Activated naive CD4-positive, alpha-beta T cell treated with anti-CD3 and anti-CD28 coated beads for 36 hours (primary cell): ENCODE measurements at regions of chr10 and their contacts with region 1.

Region 1: GRCh38 chr10:123154092-123154921 is at the start of gene BUB3:
- DNase-seq: peak; percentile 98
- H3K4me3 Mint-ChIP-seq: peak within 1 kb of the TSS; percentile 97
- H3K27ac Mint-ChIP-seq: peak within 1 kb of the TSS; percentile 100
- H3K4me1 Mint-ChIP-seq: peaks cover 71% of the 10 kb centered on the region
- H3K27me3 Mint-ChIP-seq: peaks cover 3% of the 10 kb centered on the region
- total RNA-seq, gene BUB3: 293 to 307 TPM

Region 2: DNA sequence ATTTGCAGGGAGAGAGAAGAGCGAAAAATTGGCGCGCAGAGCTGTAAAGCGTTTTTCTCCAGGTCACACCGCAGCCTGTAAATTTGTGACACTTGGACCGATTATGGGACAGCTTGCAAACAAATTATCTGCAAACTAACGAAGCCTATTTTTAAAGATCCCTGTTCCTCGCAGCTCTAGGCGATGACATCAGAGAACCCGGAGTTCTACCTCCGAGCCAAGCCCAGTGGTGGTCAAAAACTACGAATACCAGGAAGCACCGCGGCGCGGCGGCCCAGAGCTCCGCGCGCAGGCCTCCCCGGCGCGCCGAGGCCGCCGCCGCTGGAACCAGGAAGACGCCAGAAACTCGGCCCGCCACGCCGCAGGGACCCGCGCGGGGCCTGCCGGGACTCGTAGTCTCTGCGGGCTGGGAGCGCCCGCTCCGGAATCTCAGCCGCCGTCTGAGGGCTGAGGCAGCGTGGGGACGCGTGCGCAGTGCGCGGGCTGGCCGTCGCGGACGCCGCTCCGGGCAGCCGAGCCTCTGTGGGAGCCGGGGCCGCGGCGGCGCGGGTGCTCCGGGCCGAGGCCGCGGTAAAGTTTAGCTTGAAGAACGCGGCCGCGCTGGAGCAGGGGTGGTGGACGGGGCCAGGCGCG is 780.0 kb before region 1 on chr10 and contains the start of gene PLEKHA1:
- CTCF ChIA-PET with region 1: no interaction called
- intact Hi-C with region 1: loop called (anchors 1 kb)
- DNase-seq: peak; percentile 93
- H3K4me3 Mint-ChIP-seq: peak within 1 kb of the TSS; percentile 90
- H3K27ac Mint-ChIP-seq: peak within 1 kb of the TSS; percentile 94
- H3K4me1 Mint-ChIP-seq: peaks cover 37% of the 10 kb centered on the region
- H3K27me3 Mint-ChIP-seq: no peaks in the 10 kb centered on the region
- total RNA-seq, gene PLEKHA1: 17.6 to 17.9 TPM

Region 3: DNA sequence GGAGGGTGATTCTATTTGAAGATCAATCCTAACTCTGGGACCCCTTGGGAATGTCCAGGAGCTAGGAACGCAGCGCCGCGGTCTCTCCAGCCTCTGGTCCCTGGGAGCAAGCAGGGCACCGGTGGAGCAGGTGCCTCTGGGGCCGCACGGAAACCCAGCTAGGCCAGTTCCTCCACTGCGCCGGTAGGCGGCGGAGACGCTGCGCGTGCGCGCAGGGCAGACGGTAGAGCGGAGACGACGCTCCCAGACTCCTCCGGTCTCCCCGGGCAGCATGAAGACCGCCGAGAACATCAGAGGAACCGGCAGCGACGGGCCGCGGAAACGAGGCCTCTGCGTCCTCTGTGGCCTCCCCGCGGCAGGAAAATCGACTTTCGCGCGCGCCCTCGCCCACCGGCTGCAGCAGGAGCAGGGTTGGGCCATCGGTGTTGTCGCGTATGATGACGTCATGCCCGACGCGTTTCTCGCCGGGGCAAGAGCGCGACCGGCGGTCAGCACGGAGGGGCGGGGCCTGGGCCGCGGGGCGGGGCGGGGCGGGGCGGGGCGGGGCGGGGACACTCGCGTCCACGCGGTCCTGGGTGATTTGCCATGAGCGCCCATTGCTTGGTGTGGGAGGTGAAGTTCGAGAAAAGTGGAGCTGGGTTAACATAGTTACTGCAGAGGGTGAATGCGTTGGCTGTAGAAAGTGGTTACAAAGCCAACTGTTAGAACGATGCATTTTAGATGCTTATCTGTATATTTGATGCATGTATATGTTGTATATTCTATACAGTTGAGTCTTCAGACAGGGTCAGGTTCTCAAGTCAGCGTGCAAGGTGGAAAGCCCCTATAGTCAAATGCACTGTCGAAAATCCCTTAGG is 173.9 kb before region 1 on chr10 and contains the start of gene PSTK:
- CTCF ChIA-PET with region 1: interaction called, 5 read pairs
- intact Hi-C with region 1: loop called (anchors 1 kb)
- DNase-seq: peak; percentile 90
- H3K4me3 Mint-ChIP-seq: peak within 1 kb of the TSS; percentile 87
- H3K27ac Mint-ChIP-seq: peak within 1 kb of the TSS; percentile 92
- H3K4me1 Mint-ChIP-seq: peaks cover 17% of the 10 kb centered on the region
- H3K27me3 Mint-ChIP-seq: no peaks in the 10 kb centered on the region
- total RNA-seq, gene PSTK: 3.9 to 4.2 TPM

Region 4: DNA sequence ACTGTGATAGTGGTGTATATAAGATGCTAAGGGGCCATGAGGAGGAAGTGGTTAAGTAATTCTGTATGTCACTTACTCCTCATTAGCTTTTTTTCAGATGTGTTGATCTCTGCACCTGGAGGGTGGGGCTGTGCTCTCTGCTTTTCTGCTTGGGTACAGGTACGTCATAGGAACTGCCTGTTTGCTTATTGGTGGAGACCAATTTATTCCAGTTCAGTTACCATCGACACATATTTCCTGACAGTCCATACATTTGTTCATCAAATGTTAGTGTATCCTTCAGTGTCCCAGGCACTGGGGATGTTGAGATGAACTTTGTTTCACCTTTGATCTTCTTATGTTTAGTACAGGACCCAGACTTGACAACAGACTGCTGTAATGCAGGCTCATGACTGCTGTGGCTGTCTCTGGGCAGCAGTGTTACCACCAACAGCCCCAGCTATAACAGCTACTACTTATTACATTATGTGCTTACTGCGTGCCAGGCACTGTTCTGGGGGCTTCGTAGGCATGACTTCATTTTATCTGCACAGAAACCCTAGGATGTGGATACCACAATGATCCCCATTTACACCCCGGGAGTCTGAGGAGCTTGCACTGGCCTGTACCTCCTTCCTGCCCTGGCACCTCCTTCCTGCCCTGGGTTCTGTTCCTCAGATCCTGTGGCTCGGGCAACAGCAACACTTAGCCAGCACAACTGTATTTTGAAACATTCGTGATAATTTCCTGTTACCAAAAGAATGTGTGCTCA is 87.3 kb after region 1 on chr10:
- CTCF ChIA-PET with region 1: interaction called, 4 read pairs
- intact Hi-C with region 1: loop called (anchors 1 kb)
- DNase-seq: peak; percentile 64
- H3K4me3 Mint-ChIP-seq: peak overlapping the region; percentile 7
- H3K27ac Mint-ChIP-seq: peak overlapping the region; percentile 86
- H3K4me1 Mint-ChIP-seq: peaks cover 26% of the 10 kb centered on the region
- H3K27me3 Mint-ChIP-seq: no peaks in the 10 kb centered on the region

Region 5: GRCh38 chr10:123294109-123294508 is 139.8 kb after region 1 on chr10:
- CTCF ChIA-PET with region 1: no interaction called
- intact Hi-C with region 1: no loop called
- DNase-seq: peak; percentile 6
- H3K4me3 Mint-ChIP-seq: no peak overlapping the region
- H3K27ac Mint-ChIP-seq: no peak overlapping the region
- H3K4me1 Mint-ChIP-seq: no peaks in the 10 kb centered on the region
- H3K27me3 Mint-ChIP-seq: peaks cover 2% of the 10 kb centered on the region

Region 6: DNA sequence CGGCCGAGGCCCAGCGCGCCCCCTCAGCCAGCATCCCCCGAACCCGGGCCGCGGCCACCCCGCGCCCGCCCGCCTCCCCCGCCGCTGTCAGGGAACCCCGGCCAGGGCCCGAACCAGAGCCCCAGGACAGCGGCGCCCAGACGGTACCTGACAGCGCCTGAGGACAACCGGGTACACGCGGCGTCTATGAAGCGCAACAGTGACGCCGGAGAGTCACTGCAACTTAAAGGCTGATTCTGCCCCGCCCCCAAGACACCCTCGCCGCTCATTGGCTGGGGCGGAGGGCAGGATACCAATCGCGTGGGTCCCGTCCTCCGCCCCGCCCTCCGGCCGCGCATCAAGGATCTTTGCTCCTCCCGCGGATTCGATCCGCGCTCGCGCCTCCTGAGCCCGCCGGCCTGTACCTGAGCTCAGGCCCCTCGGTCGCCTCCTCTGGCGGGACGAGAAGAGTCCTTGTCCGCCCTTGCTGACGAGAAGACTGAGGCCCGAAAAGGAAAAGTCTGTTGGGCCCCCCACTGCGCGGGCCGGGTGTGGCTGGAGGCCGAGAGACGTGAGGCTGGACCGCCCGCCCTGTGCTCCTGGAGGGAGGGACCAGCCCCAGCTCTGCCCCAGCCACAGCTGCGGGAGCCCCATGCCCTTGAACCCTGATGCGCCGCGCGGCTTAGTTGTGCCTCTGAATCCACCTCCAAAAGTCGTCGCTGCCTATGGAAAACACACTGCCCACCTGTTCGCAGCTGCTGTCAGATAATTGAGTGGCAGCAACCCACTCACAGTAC is 1264.6 kb after region 1 on chr10 and contains the start of gene OAT:
- CTCF ChIA-PET with region 1: no interaction called
- intact Hi-C with region 1: loop called (anchors 1 kb)
- DNase-seq: peak; percentile 98
- H3K4me3 Mint-ChIP-seq: peak within 1 kb of the TSS; percentile 76
- H3K27ac Mint-ChIP-seq: no peak within 1 kb of the TSS
- H3K4me1 Mint-ChIP-seq: peaks cover 25% of the 10 kb centered on the region
- H3K27me3 Mint-ChIP-seq: no peaks in the 10 kb centered on the region
- total RNA-seq, gene OAT: 37.4 to 41.6 TPM